GM10248 (cell line): ENCODE measurements at regions of chr1 and their contacts with region 1.

Region 1: GRCh38 chr1:211133836-211134669 is at the start of gene KCNH1:
- DNase-seq: peak; percentile 85
- CTCF ChIP-seq: peak; percentile 69

Region 2: DNA sequence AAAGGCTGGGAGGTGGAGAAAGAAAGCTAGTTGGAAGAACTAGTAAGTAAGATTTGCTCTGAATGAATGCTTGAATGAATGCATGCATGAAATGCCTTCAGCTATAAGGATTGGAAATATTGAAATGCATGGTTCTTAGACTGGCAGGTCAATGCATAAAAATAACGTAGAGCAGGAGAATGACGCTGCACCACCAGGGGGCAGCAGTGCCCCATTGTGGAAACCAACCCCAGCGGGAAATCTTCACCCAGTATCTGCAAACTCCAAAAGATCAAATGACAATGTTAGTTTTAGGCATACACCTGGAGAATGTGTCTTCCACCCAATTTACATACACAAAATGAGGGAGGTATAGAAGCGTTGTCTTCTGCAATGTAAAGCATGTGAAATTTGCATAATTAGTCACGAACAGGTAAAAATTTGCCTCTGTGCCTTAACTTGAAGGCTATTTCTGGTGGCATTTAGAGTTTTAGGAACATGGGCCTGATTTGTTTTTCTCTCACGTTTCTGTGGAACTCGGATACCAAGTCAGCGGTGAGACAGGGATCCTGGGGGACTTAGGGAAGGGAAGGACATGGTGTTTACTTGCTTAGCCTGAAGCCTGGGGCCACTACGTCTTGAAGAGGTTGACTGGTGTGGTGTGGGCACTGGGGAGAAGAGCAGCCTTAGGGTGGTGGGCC is 726.7 kb before region 1 on chr1:
- CTCF ChIA-PET with region 1: interaction called, 36 read pairs
- POLR2A ChIA-PET with region 1: no interaction called
- DNase-seq: peak; percentile 69
- CTCF ChIP-seq: peak; percentile 86

Region 3: DNA sequence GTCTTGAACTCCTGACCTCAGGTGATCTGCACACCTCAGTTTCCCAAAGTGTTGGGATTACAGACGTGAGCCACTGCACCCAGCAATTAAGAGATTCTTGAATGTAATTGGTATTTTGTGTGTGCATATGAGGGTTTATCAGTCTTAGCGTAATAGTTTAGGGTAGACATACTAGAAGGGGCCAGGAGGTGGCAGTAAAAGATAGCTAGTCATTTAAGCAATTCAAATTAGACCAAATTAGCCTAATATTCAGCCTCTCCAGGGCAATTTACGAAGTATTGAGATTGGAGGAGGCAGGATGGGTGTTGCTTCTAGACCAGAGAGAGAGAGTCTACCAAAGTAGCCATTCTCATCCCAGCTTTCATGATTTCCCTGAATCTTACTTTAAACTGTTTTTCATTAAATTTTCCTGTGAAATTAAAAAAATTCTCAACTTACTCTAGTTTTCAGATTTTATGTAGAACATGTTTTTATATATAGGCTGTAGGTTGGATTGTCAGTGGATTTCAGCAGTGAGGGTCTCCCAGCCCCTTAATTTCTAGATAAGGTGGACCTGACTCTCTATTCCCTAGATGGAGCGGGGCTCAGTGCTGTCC is 685.7 kb before region 1 on chr1:
- CTCF ChIA-PET with region 1: interaction called, 10 read pairs
- POLR2A ChIA-PET with region 1: no interaction called
- DNase-seq: peak; percentile 34
- CTCF ChIP-seq: peak; percentile 43

Region 4: DNA sequence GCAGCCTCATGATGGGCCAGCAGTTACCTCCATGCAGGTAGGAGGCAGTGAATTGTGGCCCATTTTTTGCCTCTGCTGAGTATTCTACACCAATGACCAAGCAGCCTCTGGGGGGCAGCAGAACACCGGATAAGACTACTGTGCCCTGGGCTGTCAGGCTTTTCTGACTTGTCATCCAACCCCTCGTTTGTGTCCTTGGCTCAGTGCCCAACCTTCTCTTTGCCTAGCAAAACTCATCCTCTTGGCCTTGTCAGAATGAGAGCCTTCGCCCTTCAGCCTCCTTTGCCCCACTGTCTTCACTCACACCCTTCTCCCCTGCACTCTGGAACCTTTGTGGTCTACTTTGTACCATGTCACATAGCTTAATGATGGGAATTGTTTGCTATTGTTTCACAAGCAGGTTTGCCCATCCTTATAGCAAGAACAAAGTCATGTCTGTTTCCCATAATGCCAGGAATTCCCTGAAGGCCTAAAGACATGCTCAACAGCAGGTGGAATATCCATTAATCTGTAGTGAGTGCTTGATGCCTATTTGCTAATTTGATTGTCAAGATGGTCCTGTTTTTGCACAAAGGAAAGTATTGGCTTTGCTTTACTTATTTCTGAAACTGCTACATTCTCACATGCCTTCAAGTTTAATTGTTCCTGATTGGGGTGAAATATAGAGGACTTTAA is 549.5 kb before region 1 on chr1:
- CTCF ChIA-PET with region 1: interaction called, 71 read pairs
- POLR2A ChIA-PET with region 1: no interaction called
- DNase-seq: peak; percentile 61
- CTCF ChIP-seq: peak; percentile 70

Region 5: DNA sequence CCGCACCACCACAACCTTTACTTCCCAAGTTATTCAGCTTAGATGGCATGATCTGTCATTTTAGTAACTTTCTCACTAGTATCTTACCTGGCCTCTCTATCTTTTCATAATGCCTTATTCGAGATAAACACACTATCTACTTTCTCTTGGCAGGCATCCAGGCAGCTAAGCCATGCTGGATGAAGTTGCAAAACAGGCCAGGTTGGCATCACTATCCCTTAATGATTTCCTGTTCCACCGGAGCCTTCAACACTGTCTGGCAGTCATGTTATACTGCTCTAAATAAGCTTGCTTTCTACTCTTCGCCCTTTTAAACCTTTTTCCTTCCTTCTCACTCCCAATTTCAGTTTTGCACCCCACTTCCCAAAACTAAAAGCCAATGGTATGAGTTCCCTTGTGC is 11.9 kb after region 1 on chr1:
- CTCF ChIA-PET with region 1: interaction called, 10 read pairs
- POLR2A ChIA-PET with region 1: interaction called, 4 read pairs
- DNase-seq: no peak
- CTCF ChIP-seq: no peak